Colonic mucosa (tissue), 4 donors: ENCODE measurements at regions of chr11 and their contacts with region 1.

Region 1: DNA sequence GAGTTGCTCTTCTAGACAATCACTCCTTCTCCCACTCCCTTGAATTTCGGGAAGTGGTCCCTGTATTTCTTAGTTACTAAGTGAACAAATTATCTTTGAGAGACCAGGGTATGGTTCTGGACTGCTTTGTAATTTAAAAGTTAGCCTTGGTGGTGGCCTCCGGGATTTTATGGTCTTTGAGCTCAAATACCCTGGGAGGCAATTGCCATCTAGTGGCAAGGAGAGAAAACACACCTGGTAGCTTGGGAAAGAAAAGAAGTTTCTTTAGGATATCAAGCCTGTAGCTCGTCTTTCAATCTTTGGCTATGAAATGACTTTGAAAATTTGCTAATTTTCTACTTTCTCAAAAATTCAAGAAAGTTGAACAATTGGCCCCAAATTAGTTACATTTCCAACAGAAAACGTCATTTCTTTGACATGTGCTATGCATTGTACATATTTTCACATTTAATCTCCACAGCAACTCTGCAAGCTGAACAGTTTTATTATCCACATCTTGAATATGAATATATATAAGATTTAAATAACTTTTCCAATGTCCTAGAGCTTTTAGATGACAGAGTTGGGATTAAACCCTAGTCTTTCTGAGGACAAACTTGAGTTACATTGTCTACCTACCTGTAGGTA is 39.1 kb downstream of the MMP27 start:
- DNase-seq: peak; percentile 31
- H3K4me3 ChIP-seq: no peak overlapping the region
- H3K27ac ChIP-seq: no peak overlapping the region
- H3K4me1 ChIP-seq: no peaks in the 10 kb centered on the region
- H3K27me3 ChIP-seq: no peaks in the 10 kb centered on the region
- CTCF ChIP-seq: peak; percentile 80

Region 2: GRCh38 chr11:102346748-102347461 is 319.5 kb before region 1 on chr11 and contains the start of gene BIRC2:
- intact Hi-C with region 1: loop called (anchors 10 kb)
- DNase-seq: peak; percentile 96
- H3K4me3 ChIP-seq: peak within 1 kb of the TSS; percentile 66
- H3K27ac ChIP-seq: peak within 1 kb of the TSS; percentile 99
- H3K4me1 ChIP-seq: no peaks in the 10 kb centered on the region
- H3K27me3 ChIP-seq: no peaks in the 10 kb centered on the region
- CTCF ChIP-seq: peak; percentile 64
- total RNA-seq, gene BIRC2: 34.1 to 59.5 TPM

Region 3: GRCh38 chr11:102599642-102600261 is 66.7 kb before region 1 on chr11:
- intact Hi-C with region 1: loop called (anchors 10 kb)
- DNase-seq: no peak
- H3K4me3 ChIP-seq: no peak overlapping the region
- H3K27ac ChIP-seq: peak overlapping the region; percentile 47
- H3K4me1 ChIP-seq: no peaks in the 10 kb centered on the region
- H3K27me3 ChIP-seq: no peaks in the 10 kb centered on the region
- CTCF ChIP-seq: no peak